ENCODE measurements at regions of chr11 and their contacts with region 1.

Region 1: DNA sequence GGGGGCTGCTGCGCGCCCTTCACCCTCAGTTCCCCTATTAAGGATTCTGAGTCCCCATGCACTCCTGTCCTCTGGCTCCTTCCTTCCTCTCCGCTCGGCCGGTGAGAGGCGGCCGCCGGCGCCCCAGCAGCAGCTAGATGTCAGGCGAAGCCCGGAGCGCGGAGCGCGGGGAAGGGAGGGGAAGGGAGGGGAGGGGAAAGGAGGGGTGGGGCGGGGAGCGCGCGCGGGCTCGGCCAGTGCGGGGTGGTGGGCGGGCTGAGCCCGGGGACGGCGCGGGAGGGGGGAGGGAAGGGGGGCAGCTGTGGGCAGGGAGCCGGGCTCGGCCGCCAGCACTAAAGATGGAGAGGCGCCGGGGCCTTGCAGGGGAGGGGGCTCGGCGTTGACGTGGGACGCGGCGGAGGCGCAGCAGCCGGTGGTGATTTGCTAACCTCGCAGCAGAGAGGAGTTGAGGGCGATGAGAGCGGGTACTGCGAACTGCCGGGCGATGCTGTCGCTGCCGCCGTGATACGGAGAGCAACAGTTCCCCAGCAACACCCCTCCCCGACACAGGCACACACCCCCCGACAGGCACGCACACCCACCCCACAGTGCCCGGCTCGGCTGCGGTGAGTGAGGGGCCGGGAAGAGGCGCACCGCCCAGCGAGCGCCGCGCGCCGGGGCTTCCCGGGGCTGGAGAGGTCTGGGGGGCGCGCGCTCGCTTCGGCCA is at the start of gene ZBTB16:
- DNase-seq: no peak
- ATAC-seq: peak; percentile 40
- H3K4me3 Mint-ChIP-seq: peak within 1 kb of the TSS; percentile 87
- H3K27ac Mint-ChIP-seq: no peak within 1 kb of the TSS
- H3K4me1 Mint-ChIP-seq: peaks cover 16% of the 10 kb centered on the region
- H3K27me3 Mint-ChIP-seq: peaks cover 41% of the 10 kb centered on the region
- CTCF ChIP-seq: no peak
- total RNA-seq, gene ZBTB16: 1.3 and 2.5 TPM in 2 replicates

Region 2: GRCh38 chr11:114070464-114071139 is 11.2 kb after region 1 on chr11:
- CTCF ChIA-PET with region 1: interaction called, 7 read pairs
- POLR2A ChIA-PET with region 1: interaction called, 11 read pairs
- intact Hi-C with region 1: no loop called
- DNase-seq: no peak
- ATAC-seq: no peak
- H3K4me3 Mint-ChIP-seq: no peak overlapping the region
- H3K27ac Mint-ChIP-seq: no peak overlapping the region
- H3K4me1 Mint-ChIP-seq: no peaks in the 10 kb centered on the region
- H3K27me3 Mint-ChIP-seq: peaks cover 5% of the 10 kb centered on the region
- CTCF ChIP-seq: no peak

Region 3: DNA sequence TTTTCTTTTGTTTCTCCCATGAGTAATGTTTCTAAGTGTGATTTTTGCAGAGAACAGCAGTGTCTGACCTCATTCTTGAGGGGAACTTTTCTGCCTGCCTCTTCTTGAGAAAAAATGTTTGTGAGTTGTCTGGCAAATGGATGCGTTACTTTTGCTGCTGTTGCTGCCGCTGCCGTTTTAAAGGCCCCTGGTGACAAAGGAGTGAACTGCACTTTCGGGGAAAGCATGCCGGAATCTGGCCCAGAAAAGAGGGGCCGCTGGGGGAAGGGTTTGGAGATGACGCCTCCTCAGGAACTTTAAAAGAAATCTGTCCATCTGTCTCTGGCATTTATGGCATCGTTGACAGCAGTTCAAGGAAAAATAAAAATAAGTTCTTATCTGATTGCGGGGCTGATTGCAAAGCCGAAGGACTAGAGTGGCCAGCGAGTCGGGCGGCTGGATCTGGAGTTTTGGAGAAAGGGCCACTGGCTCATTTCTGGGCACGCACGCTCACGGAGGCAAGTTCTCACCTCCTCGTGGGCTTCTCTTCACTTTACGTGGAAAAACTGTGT is 16.5 kb after region 1 on chr11:
- CTCF ChIA-PET with region 1: interaction called, 7 read pairs
- POLR2A ChIA-PET with region 1: no interaction called
- intact Hi-C with region 1: loop called (anchors 2 kb)
- DNase-seq: no peak
- ATAC-seq: no peak
- H3K4me3 Mint-ChIP-seq: no peak overlapping the region
- H3K27ac Mint-ChIP-seq: no peak overlapping the region
- H3K4me1 Mint-ChIP-seq: peaks cover 36% of the 10 kb centered on the region
- H3K27me3 Mint-ChIP-seq: peaks cover 35% of the 10 kb centered on the region
- CTCF ChIP-seq: no peak

Region 4: GRCh38 chr11:114257621-114258558 is 198.5 kb after region 1 on chr11:
- CTCF ChIA-PET with region 1: interaction called, 18 read pairs
- POLR2A ChIA-PET with region 1: interaction called, 7 read pairs
- intact Hi-C with region 1: loop called (anchors 2 kb)
- DNase-seq: no peak
- ATAC-seq: no peak
- H3K4me3 Mint-ChIP-seq: peak overlapping the region; percentile 55
- H3K27ac Mint-ChIP-seq: peak overlapping the region; percentile 89
- H3K4me1 Mint-ChIP-seq: peaks cover 31% of the 10 kb centered on the region
- H3K27me3 Mint-ChIP-seq: no peaks in the 10 kb centered on the region
- CTCF ChIP-seq: no peak